PC-9 (cell line): ENCODE measurements at regions of chr16 and their contacts with region 1.

Region 1: GRCh38 chr16:19521471-19522396 is at the start of gene GDE1:
- DNase-seq: peak; percentile 75 to 96
- H3K4me3 ChIP-seq: peak within 1 kb of the TSS; percentile 74
- H3K27ac ChIP-seq: peak within 1 kb of the TSS; percentile 76
- H3K4me1 ChIP-seq: peaks cover 68% of the 10 kb centered on the region
- H3K27me3 ChIP-seq: no peaks in the 10 kb centered on the region
- CTCF ChIP-seq: peak; percentile 46; the same call in 1 of the 2 replicates
- total RNA-seq, gene GDE1: 131 and 154 TPM in 2 replicates

Region 2: GRCh38 chr16:18983565-18984424 is 537.9 kb before region 1 on chr16 and contains the start of gene TMC7:
- CTCF ChIA-PET with region 1: interaction called, 3 read pairs
- POLR2A ChIA-PET with region 1: no interaction called
- intact Hi-C with region 1: loop called (anchors 10 kb)
- DNase-seq: peak; percentile 70 to 94
- H3K4me3 ChIP-seq: peak within 1 kb of the TSS; percentile 74
- H3K27ac ChIP-seq: no peak within 1 kb of the TSS
- H3K4me1 ChIP-seq: peaks cover 28% of the 10 kb centered on the region
- H3K27me3 ChIP-seq: no peaks in the 10 kb centered on the region
- CTCF ChIP-seq: peak; percentile 79
- total RNA-seq, gene TMC7: 4.3 and 4.4 TPM in 2 replicates

Region 3: DNA sequence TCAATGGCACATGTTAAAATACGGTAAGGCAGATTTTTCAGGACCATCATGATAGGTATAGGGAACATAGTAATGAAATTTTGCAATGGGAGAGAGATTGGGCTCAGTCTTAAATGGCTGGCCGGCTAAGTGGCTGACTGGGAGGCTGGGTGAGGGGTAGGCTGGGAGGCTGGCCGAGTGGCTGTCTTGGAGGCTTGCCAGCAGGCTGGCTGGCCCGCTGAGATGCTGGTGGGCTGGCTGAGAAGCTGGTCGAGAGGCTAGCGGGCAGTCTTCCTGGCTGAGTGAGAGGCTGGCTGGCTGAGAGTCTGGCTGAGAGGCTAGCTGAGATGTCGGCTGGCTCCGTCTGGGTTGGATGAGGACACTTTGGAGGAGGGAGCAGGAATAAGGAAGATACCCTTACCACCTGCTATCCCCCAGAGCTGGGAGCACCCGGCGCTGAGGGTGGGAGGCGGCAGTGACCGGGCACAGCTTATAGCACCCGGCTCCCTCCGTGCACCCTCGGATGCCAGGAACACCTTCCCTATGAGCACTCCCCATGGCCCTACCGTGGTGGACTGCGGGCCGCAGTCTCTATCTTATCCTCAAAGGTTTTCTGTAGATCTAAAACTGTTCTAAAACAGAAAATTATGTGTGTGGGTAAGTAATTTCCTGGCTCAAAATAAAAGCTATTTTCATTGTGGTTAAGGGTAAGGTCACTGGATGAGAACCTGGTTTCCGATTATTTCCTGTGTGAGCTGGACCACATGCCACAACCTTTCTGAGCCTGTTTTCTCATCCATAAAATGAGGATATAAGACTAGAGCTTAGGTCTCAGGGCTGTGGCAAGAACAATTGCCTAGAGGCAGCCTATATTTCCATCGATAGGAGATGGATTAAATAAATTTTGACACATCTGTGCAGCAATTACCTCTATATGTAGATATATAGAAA is 138.6 kb before region 1 on chr16:
- CTCF ChIA-PET with region 1: no interaction called
- POLR2A ChIA-PET with region 1: interaction called, 7 read pairs
- intact Hi-C with region 1: loop called (anchors 5 kb)
- DNase-seq: peak in 1 of 2 experiments; percentile 36
- H3K4me3 ChIP-seq: no peak overlapping the region
- H3K27ac ChIP-seq: peak overlapping the region; percentile 66
- H3K4me1 ChIP-seq: peaks cover 58% of the 10 kb centered on the region
- H3K27me3 ChIP-seq: no peaks in the 10 kb centered on the region
- CTCF ChIP-seq: no peak

Region 4: GRCh38 chr16:19410435-19411161 is 111.1 kb before region 1 on chr16:
- CTCF ChIA-PET with region 1: no interaction called
- POLR2A ChIA-PET with region 1: no interaction called
- intact Hi-C with region 1: loop called (anchors 5 kb)
- DNase-seq: peak; percentile 60 to 78
- H3K4me3 ChIP-seq: peak overlapping the region; percentile 79
- H3K27ac ChIP-seq: peak overlapping the region; percentile 83
- H3K4me1 ChIP-seq: peaks cover 51% of the 10 kb centered on the region
- H3K27me3 ChIP-seq: no peaks in the 10 kb centered on the region
- CTCF ChIP-seq: peak; percentile 49; the same call in 1 of the 2 replicates

Region 5: GRCh38 chr16:19502395-19503131 is 19.2 kb before region 1 on chr16:
- CTCF ChIA-PET with region 1: interaction called, 11 read pairs
- POLR2A ChIA-PET with region 1: interaction called, 3 read pairs
- intact Hi-C with region 1: loop called (anchors 1 kb)
- DNase-seq: peak; percentile 56 to 73
- H3K4me3 ChIP-seq: no peak overlapping the region
- H3K27ac ChIP-seq: no peak overlapping the region
- H3K4me1 ChIP-seq: peaks cover 37% of the 10 kb centered on the region
- H3K27me3 ChIP-seq: no peaks in the 10 kb centered on the region
- CTCF ChIP-seq: peak; percentile 90